OCI-LY7 (cell line): ENCODE measurements at regions of chr2 and their contacts with region 1.

Region 1: DNA sequence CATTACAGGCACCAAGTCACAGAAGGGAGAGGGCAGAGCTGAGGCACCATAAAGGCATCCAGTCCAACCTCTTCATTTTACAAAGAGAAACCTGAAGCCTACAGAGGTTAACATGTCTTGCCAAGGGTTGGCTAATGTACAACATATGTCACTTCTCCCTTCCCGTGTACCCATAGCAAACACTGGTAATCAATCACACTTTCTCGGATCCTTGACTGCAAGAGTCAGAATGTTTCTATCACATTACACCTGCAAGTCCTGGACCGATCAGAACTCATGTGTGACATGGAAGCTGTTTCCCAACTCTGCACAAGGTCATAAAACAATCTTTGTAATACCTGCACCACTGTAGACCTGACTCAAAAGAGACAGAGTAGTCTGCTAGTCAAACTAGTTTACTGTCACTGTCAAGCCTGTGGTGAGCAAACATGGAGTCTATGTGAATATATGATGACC is 6.0 kb downstream of the ANKRD44 start:
- DNase-seq: peak; percentile 26
- H3K4me3 ChIP-seq: peak overlapping the region; percentile 50
- H3K27ac ChIP-seq: peak overlapping the region; percentile 83
- H3K4me1 ChIP-seq: peaks cover 88% of the 10 kb centered on the region
- CTCF ChIP-seq: no peak

Region 2: DNA sequence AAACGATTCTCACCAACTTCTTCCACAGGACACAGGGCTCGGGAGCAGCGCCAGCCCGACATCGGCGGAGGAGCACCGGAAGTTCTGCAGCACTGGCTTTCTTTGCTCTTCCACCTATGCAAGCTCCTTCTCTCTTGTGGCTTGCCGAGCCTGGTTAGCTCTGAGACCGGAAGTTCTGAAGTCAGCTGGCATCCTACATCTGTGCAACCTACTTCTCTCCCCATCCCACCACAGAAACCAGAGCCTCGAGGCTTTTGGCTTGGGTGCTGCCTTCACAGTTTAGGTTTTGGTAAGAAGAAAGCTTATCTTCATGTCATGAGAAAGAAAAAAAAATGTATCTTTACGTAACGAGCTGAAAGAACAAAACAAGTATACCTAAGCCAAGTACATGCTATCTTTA is 105.7 kb before region 1 on chr2:
- CTCF ChIA-PET with region 1: interaction called, 3 read pairs
- POLR2A ChIA-PET with region 1: interaction called, 69 read pairs
- intact Hi-C with region 1: no loop called
- DNase-seq: peak; percentile 97
- H3K4me3 ChIP-seq: peak overlapping the region; percentile 53
- H3K27ac ChIP-seq: peak overlapping the region; percentile 81
- H3K4me1 ChIP-seq: peaks cover 63% of the 10 kb centered on the region
- CTCF ChIP-seq: no peak